B cell (primary cell): ENCODE measurements at regions of chr4 and their contacts with region 1.

Region 1: GRCh38 chr4:44678094-44679041 is at the start of gene GUF1:
- DNase-seq: peak; percentile 95
- ATAC-seq: peak; percentile 88
- H3K4me3 ChIP-seq: peak within 1 kb of the TSS; percentile 87 to 99 (median 94)
- H3K4me3 Mint-ChIP-seq: peak within 1 kb of the TSS; percentile 97
- H3K27ac ChIP-seq: peak within 1 kb of the TSS; percentile 92 to 96
- H3K27ac Mint-ChIP-seq: peak within 1 kb of the TSS; percentile 98
- H3K4me1 ChIP-seq: peaks cover 15% of the 10 kb centered on the region in 2 donors
- H3K4me1 Mint-ChIP-seq: peaks cover 30% of the 10 kb centered on the region
- H3K27me3 ChIP-seq: no peaks in the 10 kb centered on the region
- H3K27me3 Mint-ChIP-seq: no peaks in the 10 kb centered on the region
- CTCF ChIP-seq: no peak
- total RNA-seq, gene GUF1: 24.2 and 25.0 TPM in 2 replicates

Region 2: GRCh38 chr4:44186096-44186849 is 492.1 kb before region 1 on chr4:
- CTCF ChIA-PET with region 1: no interaction called
- POLR2A ChIA-PET with region 1: no interaction called
- intact Hi-C with region 1: no loop called
- DNase-seq: no peak
- ATAC-seq: no peak
- H3K4me3 ChIP-seq: no peak overlapping the region
- H3K4me3 Mint-ChIP-seq: no peak overlapping the region
- H3K27ac ChIP-seq: no peak overlapping the region
- H3K27ac Mint-ChIP-seq: no peak overlapping the region
- H3K4me1 ChIP-seq: no peaks in the 10 kb centered on the region
- H3K4me1 Mint-ChIP-seq: no peaks in the 10 kb centered on the region
- H3K27me3 ChIP-seq: no peaks in the 10 kb centered on the region
- H3K27me3 Mint-ChIP-seq: no peaks in the 10 kb centered on the region
- CTCF ChIP-seq: no peak

Region 3: DNA sequence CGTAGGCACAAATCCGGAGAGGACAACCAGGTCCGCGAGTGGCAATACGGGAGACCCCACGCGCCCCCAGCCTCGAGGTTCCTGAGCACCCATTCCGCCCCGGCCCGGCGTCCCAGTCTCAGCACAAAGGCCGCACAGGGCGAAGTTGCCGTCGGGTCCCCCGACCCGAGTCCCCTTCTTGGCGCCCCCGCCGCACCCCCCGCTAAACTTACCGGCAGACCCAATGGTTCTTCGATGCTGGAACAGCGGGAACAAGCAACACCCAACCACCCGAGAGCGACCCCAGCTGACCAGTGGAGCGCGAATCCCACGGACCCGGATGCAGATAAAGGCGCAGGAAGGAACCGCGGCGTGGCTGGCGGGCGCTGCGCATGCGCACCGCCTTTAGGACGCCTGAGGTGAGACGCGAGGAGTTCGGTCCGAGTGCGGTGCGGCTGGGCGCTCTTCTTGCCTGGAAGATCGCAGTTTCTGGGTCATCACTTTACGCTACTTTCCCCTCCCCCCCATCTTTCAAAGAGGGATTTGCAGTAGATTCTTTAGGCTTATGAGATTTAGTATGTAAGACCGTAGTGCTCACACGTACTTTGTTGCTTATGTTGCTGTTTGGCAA is 48.0 kb after region 1 on chr4 and contains the start of gene GNPDA2:
- CTCF ChIA-PET with region 1: interaction called, 6 read pairs
- POLR2A ChIA-PET with region 1: interaction called, 11 read pairs
- intact Hi-C with region 1: loop called (anchors 1 kb)
- DNase-seq: peak; percentile 90
- ATAC-seq: peak; percentile 92
- H3K4me3 ChIP-seq: peak within 1 kb of the TSS; percentile 45 to 87 (median 79)
- H3K4me3 Mint-ChIP-seq: peak within 1 kb of the TSS; percentile 93
- H3K27ac ChIP-seq: peak within 1 kb of the TSS; percentile 62 to 80
- H3K27ac Mint-ChIP-seq: peak within 1 kb of the TSS; percentile 89
- H3K4me1 ChIP-seq: peaks cover 17 to 20% of the 10 kb centered on the region in 2 donors
- H3K4me1 Mint-ChIP-seq: peaks cover 34% of the 10 kb centered on the region
- H3K27me3 ChIP-seq: no peaks in the 10 kb centered on the region
- H3K27me3 Mint-ChIP-seq: peaks cover 1% of the 10 kb centered on the region
- CTCF ChIP-seq: no peak
- total RNA-seq, gene GNPDA2: 15.1 and 15.5 TPM in 2 replicates